PC-9 (cell line): ENCODE measurements at regions of chr1 and their contacts with region 1.

Region 1: DNA sequence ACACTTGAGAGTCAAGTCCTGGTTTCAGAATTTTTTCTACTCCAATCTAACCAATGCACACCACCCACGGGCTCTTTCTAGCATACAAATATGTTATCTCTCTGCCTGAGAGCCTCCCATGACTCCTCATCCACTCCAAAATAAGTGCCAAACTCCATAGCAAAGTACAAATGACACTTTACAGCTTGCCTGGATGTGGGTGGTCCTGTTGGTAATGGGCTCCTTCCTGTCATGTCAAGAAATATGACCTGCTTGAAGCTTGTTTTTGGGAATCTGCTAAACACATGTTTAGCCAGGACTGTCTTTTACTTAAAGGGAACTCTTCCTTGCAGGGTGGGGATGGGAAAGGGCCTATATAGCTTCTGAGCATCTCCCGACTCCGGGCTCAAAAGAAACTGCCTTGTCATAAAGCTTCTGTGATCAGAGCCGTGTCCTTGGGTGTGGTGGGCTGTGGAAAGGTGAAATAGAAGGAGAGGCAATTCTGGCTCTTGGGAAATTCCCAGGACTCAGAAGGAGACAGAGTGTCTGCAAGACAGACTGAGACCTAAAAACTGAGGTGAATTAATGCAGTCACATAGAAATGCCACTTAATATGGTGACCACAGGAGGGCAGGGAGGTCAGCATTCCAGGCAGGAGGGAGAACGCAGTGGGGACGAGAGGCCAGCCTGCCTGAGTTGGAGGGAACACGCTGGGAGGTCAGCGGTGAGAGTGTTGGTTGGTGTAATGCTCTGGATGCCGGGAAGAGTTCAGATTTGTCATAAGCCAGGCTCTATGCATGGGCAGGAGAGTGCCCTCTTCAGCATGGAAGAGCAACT is 6.1 kb upstream of the IGFN1 start:
- DNase-seq: peak; percentile 44 to 59
- H3K4me3 ChIP-seq: no peak overlapping the region
- H3K27ac ChIP-seq: no peak overlapping the region
- H3K4me1 ChIP-seq: no peaks in the 10 kb centered on the region
- H3K27me3 ChIP-seq: no peaks in the 10 kb centered on the region
- CTCF ChIP-seq: peak; percentile 69

Region 2: GRCh38 chr1:201149400-201149799 is 35.1 kb before region 1 on chr1:
- CTCF ChIA-PET with region 1: no interaction called
- POLR2A ChIA-PET with region 1: no interaction called
- intact Hi-C with region 1: loop called (anchors 1 kb)
- DNase-seq: peak in 1 of 2 experiments; percentile 47
- H3K4me3 ChIP-seq: no peak overlapping the region
- H3K27ac ChIP-seq: no peak overlapping the region
- H3K4me1 ChIP-seq: 0 out of 2 replicates have a peak, but pooled peaks cover 6% of the 10 kb centered on the region
- H3K27me3 ChIP-seq: no peaks in the 10 kb centered on the region
- CTCF ChIP-seq: peak; percentile 70

Region 3: DNA sequence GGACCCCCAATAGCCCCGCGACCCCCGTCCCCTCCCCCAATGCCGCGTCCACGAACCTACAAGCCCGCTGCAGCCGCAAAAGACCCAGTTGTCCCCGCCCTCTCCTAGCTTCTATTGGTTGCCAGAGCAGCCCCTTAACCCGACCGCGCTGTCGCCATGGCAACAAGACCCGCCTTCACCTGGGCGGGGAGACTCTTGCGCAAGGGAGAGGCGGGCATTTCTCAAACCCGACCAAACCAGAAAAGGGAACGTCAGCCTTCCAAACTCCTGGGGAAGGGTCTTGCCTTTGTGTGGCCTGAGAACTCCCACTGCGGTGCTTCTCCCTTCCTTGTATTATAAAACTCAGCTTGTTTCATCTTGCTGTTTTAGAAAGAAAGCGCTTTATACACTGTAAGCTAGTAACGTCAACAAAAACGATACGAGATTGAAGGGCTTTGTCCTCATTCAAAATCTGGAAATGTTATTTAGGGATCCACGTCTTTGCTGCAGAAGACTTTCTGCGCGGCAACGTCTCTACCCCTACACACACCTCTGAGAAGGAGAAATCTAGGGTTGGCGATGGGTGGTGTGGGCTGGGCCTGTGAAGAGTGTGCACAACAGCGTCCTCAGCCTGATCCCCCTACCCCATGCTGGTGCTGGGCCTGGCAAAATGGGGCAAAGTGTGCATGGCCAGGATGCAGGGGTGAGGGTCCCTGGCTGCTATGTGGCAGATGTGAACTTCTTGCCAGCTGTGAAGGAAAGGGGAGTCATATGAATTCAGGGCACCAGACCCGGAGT is 29.9 kb before region 1 on chr1 and contains the start of gene TMEM9:
- CTCF ChIA-PET with region 1: no interaction called
- POLR2A ChIA-PET with region 1: no interaction called
- intact Hi-C with region 1: loop called (anchors 1 kb)
- DNase-seq: peak; percentile 80 to 96
- H3K4me3 ChIP-seq: peak within 1 kb of the TSS; percentile 61
- H3K27ac ChIP-seq: no peak within 1 kb of the TSS
- H3K4me1 ChIP-seq: peaks cover 11% of the 10 kb centered on the region; the same call in 1 of the 2 replicates
- H3K27me3 ChIP-seq: no peaks in the 10 kb centered on the region
- CTCF ChIP-seq: no peak
- total RNA-seq, gene TMEM9: 92.9 and 94.3 TPM in 2 replicates

Region 4: GRCh38 chr1:201241736-201242135 is 57.2 kb after region 1 on chr1:
- CTCF ChIA-PET with region 1: no interaction called
- POLR2A ChIA-PET with region 1: no interaction called
- intact Hi-C with region 1: no loop called
- DNase-seq: no peak
- H3K4me3 ChIP-seq: no peak overlapping the region
- H3K27ac ChIP-seq: no peak overlapping the region
- H3K4me1 ChIP-seq: no peaks in the 10 kb centered on the region
- H3K27me3 ChIP-seq: peaks cover 37% of the 10 kb centered on the region
- CTCF ChIP-seq: no peak